ENCODE measurements at regions of chr1 and their contacts with region 1.

Region 1: DNA sequence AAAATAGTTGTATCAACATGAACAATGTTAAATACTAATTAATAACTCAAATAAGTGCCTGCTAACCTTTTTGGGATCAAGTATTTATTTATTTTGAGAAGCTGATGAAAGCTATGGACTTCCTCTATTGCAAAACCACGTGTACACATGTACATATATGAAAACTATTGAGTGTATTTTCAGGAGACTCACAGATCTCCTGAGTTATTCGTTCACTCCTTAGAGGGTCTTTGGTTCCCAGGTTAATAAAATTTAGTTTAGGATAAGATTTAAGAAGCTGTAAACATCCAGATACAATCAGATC is 130.5 kb downstream of the DISC1 start:
- DNase-seq: no peak
- H3K4me3 ChIP-seq: no peak overlapping the region
- H3K27ac ChIP-seq: no peak overlapping the region
- H3K4me1 ChIP-seq: no peaks in the 10 kb centered on the region
- H3K27me3 ChIP-seq: no peaks in the 10 kb centered on the region
- CTCF ChIP-seq: no peak
- POLR2A ChIP-seq: no peak

Region 2: GRCh38 chr1:231770506-231771175 is 13.6 kb after region 1 on chr1:
- CTCF ChIA-PET with region 1: interaction called, 48 read pairs
- POLR2A ChIA-PET with region 1: no interaction called
- dilution Hi-C with region 1: no loop called
- intact Hi-C with region 1: no loop called
- DNase-seq: no peak
- H3K4me3 ChIP-seq: no peak overlapping the region
- H3K27ac ChIP-seq: no peak overlapping the region
- H3K4me1 ChIP-seq: no peaks in the 10 kb centered on the region
- H3K27me3 ChIP-seq: no peaks in the 10 kb centered on the region
- CTCF ChIP-seq: no peak
- POLR2A ChIP-seq: no peak

Region 3: DNA sequence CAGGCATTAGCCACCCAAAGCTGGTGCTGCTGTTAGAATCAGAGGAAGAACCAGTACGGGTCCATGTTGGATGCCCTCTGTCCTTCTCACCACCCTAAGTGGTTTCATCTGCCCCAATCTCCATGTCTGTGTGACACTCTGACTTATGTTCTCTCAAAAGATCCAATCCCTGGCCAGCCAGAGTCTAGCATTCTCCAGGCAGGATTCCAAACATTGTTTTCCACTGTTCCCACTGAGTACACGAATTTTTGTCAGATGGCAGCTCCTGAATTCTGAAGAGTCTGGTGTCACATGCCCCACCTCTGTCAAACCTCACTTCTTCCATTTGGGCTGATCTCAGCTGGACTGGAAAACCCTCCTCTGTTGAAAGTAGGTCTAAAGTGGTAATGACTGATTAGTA is 35.6 kb after region 1 on chr1:
- CTCF ChIA-PET with region 1: interaction called, 13 read pairs
- POLR2A ChIA-PET with region 1: no interaction called
- dilution Hi-C with region 1: no loop called
- intact Hi-C with region 1: no loop called
- DNase-seq: peak; percentile 49
- H3K4me3 ChIP-seq: no peak overlapping the region
- H3K27ac ChIP-seq: no peak overlapping the region
- H3K4me1 ChIP-seq: peaks cover 2% of the 10 kb centered on the region
- H3K27me3 ChIP-seq: no peaks in the 10 kb centered on the region
- CTCF ChIP-seq: no peak
- POLR2A ChIP-seq: no peak

Region 4: GRCh38 chr1:231806623-231807495 is 49.8 kb after region 1 on chr1:
- CTCF ChIA-PET with region 1: interaction called, 107 read pairs
- POLR2A ChIA-PET with region 1: no interaction called
- dilution Hi-C with region 1: no loop called
- intact Hi-C with region 1: loop called (anchors 1 kb)
- DNase-seq: peak; percentile 50
- H3K4me3 ChIP-seq: no peak overlapping the region
- H3K27ac ChIP-seq: no peak overlapping the region
- H3K4me1 ChIP-seq: peaks cover 9% of the 10 kb centered on the region
- H3K27me3 ChIP-seq: no peaks in the 10 kb centered on the region
- CTCF ChIP-seq: peak; percentile 74 to 86
- POLR2A ChIP-seq: no peak

Region 5: DNA sequence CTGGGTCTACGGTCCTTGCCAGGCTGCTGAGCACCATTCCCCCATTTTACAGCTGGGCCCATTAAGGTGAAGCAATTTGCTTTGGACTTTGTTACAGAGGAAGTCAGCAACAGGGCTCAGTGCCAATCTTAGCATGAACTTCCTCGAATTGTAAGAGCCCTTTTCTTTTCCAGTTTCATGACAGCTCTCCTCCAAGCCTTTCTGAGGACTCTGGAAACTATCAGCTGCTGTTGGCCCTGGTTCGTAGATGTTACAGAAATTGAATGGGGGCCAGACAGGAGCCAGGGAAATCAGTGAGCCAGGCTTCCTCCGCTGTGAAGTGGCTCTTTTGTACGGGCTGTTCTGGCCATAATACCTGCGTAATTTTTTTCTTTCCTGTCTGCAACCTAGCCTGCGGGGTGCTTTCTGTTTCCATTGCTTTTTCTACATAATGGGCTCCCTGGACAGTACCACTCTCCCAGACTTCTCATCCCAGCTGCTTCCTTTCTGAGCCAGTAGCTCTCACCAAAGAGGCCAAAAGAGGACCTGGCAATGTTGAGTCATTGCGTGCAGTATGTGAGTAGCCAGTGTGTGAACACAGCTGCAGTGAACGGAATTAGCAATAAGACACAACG is 255.8 kb after region 1 on chr1:
- CTCF ChIA-PET with region 1: no interaction called
- POLR2A ChIA-PET with region 1: no interaction called
- dilution Hi-C with region 1: no loop called
- intact Hi-C with region 1: loop called (anchors 10 kb)
- DNase-seq: peak; percentile 97
- H3K4me3 ChIP-seq: peak overlapping the region in 1 of 3 experiments; percentile 14
- H3K27ac ChIP-seq: peak overlapping the region; percentile 80
- H3K4me1 ChIP-seq: peaks cover 27% of the 10 kb centered on the region
- H3K27me3 ChIP-seq: no peaks in the 10 kb centered on the region
- CTCF ChIP-seq: no peak
- POLR2A ChIP-seq: no peak